ENCODE measurements at regions of chr14 and their contacts with region 1.

Region 1: GRCh38 chr14:77023001-77023996 is 5.2 kb downstream of the IRF2BPL start:
- DNase-seq: peak; percentile 44
- ATAC-seq: peak; percentile 40
- H3K4me3 Mint-ChIP-seq: peak overlapping the region; percentile 49
- H3K27ac Mint-ChIP-seq: peak overlapping the region; percentile 99
- H3K4me1 Mint-ChIP-seq: peaks cover 32% of the 10 kb centered on the region
- H3K27me3 Mint-ChIP-seq: peaks cover 2% of the 10 kb centered on the region; the same call in 1 of the 2 replicates
- CTCF ChIP-seq: no peak

Region 2: DNA sequence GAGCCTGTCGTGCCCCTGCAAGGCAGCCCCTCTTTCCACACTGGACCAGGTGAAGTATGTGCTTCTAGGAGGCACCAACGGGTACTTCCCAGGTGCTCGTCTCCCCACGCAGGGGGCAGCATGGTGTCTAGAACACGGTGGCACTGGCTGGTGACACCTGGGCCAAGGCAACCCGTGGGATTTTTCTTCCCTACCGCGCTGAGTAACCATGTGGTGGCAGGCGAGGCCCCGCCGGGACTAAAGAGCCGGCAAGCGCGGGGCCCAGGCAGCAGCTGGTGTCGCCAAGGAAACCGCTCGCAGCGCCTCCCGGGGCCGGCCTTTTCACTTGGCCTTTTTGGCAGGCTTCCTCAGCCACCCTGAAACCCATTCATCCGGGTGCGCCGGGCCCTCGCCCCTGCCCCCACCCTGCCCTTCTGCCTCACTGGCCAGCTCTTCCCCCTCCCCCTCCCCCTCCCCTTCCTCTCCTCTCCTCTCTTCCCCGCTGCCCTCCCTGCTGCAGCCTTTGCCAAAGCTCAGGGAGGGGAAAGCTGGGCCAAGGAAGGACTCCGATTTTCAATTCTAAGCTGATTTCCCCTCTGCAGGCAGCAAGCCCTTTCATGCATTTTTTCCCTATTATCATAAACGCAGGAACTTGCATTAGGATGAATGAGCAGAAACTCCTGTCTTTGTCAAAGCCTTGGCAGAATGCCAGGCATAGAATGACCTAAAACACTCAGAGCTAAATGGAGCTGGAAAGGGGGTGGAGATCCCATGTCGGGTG is 76.0 kb before region 1 on chr14:
- CTCF ChIA-PET with region 1: interaction called, 14 read pairs
- POLR2A ChIA-PET with region 1: interaction called, 7 read pairs
- DNase-seq: peak; percentile 94
- ATAC-seq: peak; percentile 82
- H3K4me3 Mint-ChIP-seq: peak overlapping the region; percentile 49
- H3K27ac Mint-ChIP-seq: peak overlapping the region; percentile 99
- H3K4me1 Mint-ChIP-seq: peaks cover 51% of the 10 kb centered on the region
- H3K27me3 Mint-ChIP-seq: no peaks in the 10 kb centered on the region
- CTCF ChIP-seq: no peak

Region 3: GRCh38 chr14:76956316-76957090 is 66.8 kb before region 1 on chr14:
- CTCF ChIA-PET with region 1: interaction called, 14 read pairs
- POLR2A ChIA-PET with region 1: interaction called, 45 read pairs
- DNase-seq: peak; percentile 92
- ATAC-seq: peak; percentile 71
- H3K4me3 Mint-ChIP-seq: peak overlapping the region; percentile 55
- H3K27ac Mint-ChIP-seq: peak overlapping the region; percentile 98
- H3K4me1 Mint-ChIP-seq: peaks cover 71% of the 10 kb centered on the region
- H3K27me3 Mint-ChIP-seq: no peaks in the 10 kb centered on the region
- CTCF ChIP-seq: no peak

Region 4: DNA sequence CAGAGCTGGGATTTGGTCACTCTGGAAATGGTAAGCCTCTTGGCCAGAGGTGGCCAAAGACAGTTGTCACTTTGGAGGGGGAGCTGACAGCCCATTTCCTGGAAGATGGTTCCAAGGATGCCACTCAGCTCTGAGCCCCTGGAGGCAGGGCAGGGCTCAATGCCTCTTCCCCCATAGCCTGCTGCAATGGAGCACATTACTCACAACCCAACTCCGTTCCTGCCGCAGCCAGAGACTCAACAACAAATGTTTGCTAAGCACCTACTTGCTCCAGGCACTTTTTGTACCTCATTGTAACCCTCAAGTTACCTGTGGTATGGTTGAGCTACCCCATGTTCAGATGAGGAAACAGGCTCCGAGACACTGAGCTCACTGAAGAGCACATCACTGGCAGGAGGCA is 14.3 kb before region 1 on chr14:
- CTCF ChIA-PET with region 1: interaction called, 11 read pairs
- POLR2A ChIA-PET with region 1: interaction called, 15 read pairs
- DNase-seq: no peak
- ATAC-seq: no peak
- H3K4me3 Mint-ChIP-seq: no peak overlapping the region
- H3K27ac Mint-ChIP-seq: no peak overlapping the region
- H3K4me1 Mint-ChIP-seq: peaks cover 68% of the 10 kb centered on the region
- H3K27me3 Mint-ChIP-seq: no peaks in the 10 kb centered on the region
- CTCF ChIP-seq: no peak

Region 5: GRCh38 chr14:77033622-77034521 is 10.6 kb after region 1 on chr14:
- CTCF ChIA-PET with region 1: interaction called, 4 read pairs
- POLR2A ChIA-PET with region 1: interaction called, 24 read pairs
- DNase-seq: peak; percentile 95
- ATAC-seq: peak; percentile 70
- H3K4me3 Mint-ChIP-seq: peak overlapping the region; percentile 71
- H3K27ac Mint-ChIP-seq: peak overlapping the region; percentile 99
- H3K4me1 Mint-ChIP-seq: peaks cover 77% of the 10 kb centered on the region
- H3K27me3 Mint-ChIP-seq: peaks cover 5% of the 10 kb centered on the region
- CTCF ChIP-seq: no peak

Region 6: DNA sequence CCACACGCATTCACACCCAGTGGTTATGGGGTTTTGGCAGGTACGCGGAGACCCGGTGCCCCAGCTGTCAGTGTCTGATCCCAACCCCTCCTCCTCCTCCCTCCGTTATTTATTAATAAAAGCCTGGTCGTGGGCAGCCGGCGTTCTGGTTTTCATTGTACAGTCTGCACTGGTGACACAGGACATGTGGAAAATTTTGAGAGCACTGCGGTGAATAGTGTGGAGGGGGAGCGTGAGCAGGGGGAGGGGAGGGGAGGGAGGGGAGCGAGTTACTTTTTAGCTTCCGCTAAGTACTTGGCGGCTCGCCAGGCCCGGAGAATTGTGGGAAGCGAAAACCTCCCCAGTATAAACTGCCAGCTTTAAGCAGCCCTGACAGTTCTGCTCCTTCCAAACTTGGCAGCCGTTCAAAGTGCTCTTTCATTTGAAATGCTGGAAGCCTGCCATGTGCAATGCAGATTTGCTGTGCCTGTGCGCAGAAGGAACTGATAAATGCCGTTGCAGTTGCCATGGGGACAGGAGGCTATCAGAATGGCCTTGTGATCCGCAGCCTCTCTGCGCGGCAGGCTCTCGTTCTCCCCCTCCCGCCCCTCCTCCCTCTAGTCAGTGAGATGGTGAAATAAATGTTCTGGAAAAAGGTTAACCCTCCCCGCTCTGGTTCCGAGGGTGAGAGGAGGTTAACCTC is 16.9 kb after region 1 on chr14:
- CTCF ChIA-PET with region 1: interaction called, 12 read pairs
- POLR2A ChIA-PET with region 1: interaction called, 16 read pairs
- DNase-seq: peak; percentile 78
- ATAC-seq: peak; percentile 51
- H3K4me3 Mint-ChIP-seq: peak overlapping the region; percentile 66
- H3K27ac Mint-ChIP-seq: peak overlapping the region; percentile 99
- H3K4me1 Mint-ChIP-seq: peaks cover 86% of the 10 kb centered on the region
- H3K27me3 Mint-ChIP-seq: peaks cover 7% of the 10 kb centered on the region
- CTCF ChIP-seq: no peak